ENCODE measurements at regions of chr16 and their contacts with region 1.

Region 1: DNA sequence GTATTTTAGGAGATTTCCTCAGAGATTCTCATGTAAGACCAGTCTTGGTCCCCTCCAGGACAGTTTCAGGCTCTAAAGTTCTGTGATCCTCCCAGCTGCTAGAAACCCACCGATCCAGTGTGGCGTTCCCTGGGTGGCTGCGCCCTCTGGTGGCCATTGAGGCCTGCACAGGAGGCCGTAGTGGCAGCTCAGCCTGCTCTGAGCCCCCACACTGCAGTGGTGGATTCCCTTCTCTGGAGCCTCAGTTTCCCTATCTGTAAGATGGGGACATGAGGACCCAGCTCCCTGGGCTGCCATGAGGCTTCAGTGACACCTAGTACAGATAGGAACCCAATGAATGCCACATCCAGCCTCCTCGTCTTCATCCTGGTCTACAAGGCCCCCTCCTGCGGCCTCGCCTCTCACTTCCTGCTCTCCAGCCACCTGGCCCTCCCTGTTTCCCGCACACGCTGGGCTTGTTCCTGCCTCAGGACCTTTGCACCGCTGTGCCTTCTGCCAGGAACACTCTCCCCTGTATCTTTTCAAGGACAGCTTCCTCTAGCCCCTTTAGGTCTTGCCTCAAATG is 16.5 kb downstream of the CCDC102A start:
- DNase-seq: peak; percentile 88
- ATAC-seq: peak; percentile 97
- H3K4me3 Mint-ChIP-seq: no peak overlapping the region
- H3K27ac Mint-ChIP-seq: peak overlapping the region; percentile 32
- H3K4me1 Mint-ChIP-seq: peaks cover 17% of the 10 kb centered on the region
- H3K27me3 Mint-ChIP-seq: no peaks in the 10 kb centered on the region

Region 2: GRCh38 chr16:57447186-57447962 is 72.5 kb before region 1 on chr16 and contains the starts of genes CIAPIN1 and COQ9:
- CTCF ChIA-PET with region 1: interaction called, 15 read pairs
- POLR2A ChIA-PET with region 1: interaction called, 3 read pairs
- DNase-seq: peak; percentile 96
- ATAC-seq: peak; percentile 99
- H3K4me3 Mint-ChIP-seq: peak within 1 kb of the TSS; percentile 93
- H3K27ac Mint-ChIP-seq: peak within 1 kb of the TSS; percentile 92
- H3K4me1 Mint-ChIP-seq: peaks cover 30% of the 10 kb centered on the region
- H3K27me3 Mint-ChIP-seq: no peaks in the 10 kb centered on the region
- total RNA-seq, gene CIAPIN1: 47.8 to 53.8 TPM
- total RNA-seq, gene COQ9: 38.2 to 40.4 TPM

Region 3: GRCh38 chr16:57475711-57476339 is 44.1 kb before region 1 on chr16:
- CTCF ChIA-PET with region 1: interaction called, 27 read pairs
- POLR2A ChIA-PET with region 1: no interaction called
- DNase-seq: peak; percentile 90
- ATAC-seq: peak; percentile 98
- H3K4me3 Mint-ChIP-seq: peak overlapping the region; percentile 34
- H3K27ac Mint-ChIP-seq: peak overlapping the region; percentile 68
- H3K4me1 Mint-ChIP-seq: peaks cover 31% of the 10 kb centered on the region
- H3K27me3 Mint-ChIP-seq: no peaks in the 10 kb centered on the region

Region 4: DNA sequence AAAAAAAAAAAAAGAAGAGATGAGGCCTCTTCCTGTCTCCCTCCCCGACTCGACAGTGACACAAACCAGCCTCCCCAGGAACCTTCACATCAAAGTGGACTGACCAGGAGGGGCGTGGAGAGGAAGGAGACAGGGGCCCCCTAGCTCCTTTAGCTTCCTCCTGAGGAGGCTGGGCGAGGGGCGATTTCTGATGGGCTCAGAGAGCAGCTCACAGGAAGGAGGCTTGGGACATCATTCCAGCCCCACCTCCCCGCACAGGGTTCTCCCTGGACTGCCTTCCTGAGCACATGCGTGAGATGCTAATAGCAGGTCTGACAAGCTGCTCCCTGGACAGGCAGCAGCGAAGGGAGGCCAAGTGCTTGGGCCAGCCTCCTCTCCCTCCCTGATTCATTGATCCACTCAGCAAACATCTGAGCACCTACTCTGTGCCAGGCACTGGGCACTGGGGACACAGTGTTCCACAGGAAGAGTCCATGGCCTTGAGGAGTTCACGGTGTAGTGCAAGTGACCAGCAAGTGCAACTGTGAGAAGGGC is 19.2 kb before region 1 on chr16:
- CTCF ChIA-PET with region 1: interaction called, 17 read pairs
- POLR2A ChIA-PET with region 1: no interaction called
- DNase-seq: peak; percentile 70
- ATAC-seq: peak; percentile 85
- H3K4me3 Mint-ChIP-seq: peak overlapping the region; percentile 5
- H3K27ac Mint-ChIP-seq: peak overlapping the region; percentile 83
- H3K4me1 Mint-ChIP-seq: peaks cover 17% of the 10 kb centered on the region
- H3K27me3 Mint-ChIP-seq: peaks cover 4% of the 10 kb centered on the region